H1 (cell line): ENCODE measurements at regions of chr5 and their contacts with region 1.

Region 1: GRCh38 chr5:35777358-35778087 is 79.2 kb upstream of the IL7R start:
- DNase-seq: peak in 1 of 2 experiments; percentile 68
- H3K4me3 ChIP-seq: no peak overlapping the region
- H3K27ac ChIP-seq: no peak overlapping the region
- H3K4me1 ChIP-seq: no peaks in the 10 kb centered on the region
- H3K27me3 ChIP-seq: peaks cover 0 to 1% (median 0%) of the 10 kb centered on the region in 4 experiments; a peak in 1 of 7 replicates
- CTCF ChIP-seq: peak in 2 of 3 experiments; percentile 52; a peak in 2 of 4 replicates
- EP300 ChIP-seq: no peak
- POLR2A ChIP-seq: no peak
- RAD21 ChIP-seq: peak; percentile 60 to 68

Region 2: GRCh38 chr5:35587419-35587818 is 190.1 kb before region 1 on chr5:
- CTCF ChIA-PET with region 1: no interaction called
- POLR2A ChIA-PET with region 1: no interaction called
- DNase-seq: no peak
- H3K4me3 ChIP-seq: no peak overlapping the region
- H3K27ac ChIP-seq: no peak overlapping the region
- H3K4me1 ChIP-seq: no peaks in the 10 kb centered on the region
- H3K27me3 ChIP-seq: no peaks in the 10 kb centered on the region
- CTCF ChIP-seq: no peak
- EP300 ChIP-seq: no peak
- POLR2A ChIP-seq: no peak
- RAD21 ChIP-seq: no peak

Region 3: DNA sequence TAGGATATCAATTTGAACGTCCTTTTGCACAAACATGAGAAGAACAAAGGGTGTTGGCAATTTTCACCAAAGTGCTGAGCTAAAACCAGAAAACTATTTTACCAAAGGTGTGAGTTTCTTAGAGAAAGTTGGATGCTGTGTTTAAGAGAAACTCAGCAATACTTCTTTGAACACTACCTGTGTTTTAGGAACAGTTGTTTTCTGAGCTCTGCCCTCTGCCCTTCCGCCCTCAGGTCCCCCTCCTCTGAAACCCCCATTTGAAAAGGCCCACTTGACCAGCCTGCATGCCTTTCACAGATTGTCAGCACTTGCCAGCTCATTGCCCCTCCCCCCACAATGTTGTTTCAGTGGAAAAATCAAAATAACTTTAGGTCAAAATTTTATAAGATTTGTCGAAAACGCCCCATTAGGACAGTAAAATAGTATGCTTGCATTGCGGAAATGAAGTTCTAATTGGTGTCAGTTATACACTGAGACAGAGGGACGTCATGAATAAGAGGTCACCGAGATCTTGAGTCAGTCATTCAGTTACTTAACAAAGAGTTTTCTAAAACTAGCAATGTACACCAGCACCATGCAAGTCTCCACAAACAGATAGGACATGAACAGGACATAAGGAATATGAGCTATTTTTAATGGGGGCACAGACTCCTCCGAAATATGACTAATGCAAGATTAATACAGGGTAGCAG is 17.3 kb after region 1 on chr5:
- CTCF ChIA-PET with region 1: interaction called, 23 read pairs
- POLR2A ChIA-PET with region 1: no interaction called
- DNase-seq: no peak
- H3K4me3 ChIP-seq: no peak overlapping the region
- H3K27ac ChIP-seq: no peak overlapping the region
- H3K4me1 ChIP-seq: peaks cover 0 to 6% (median 2%) of the 10 kb centered on the region in 4 experiments; a peak in 2 of 7 replicates
- H3K27me3 ChIP-seq: no peaks in the 10 kb centered on the region
- CTCF ChIP-seq: no peak
- EP300 ChIP-seq: no peak
- POLR2A ChIP-seq: no peak
- RAD21 ChIP-seq: no peak

Region 4: GRCh38 chr5:35920890-35921289 is 143.4 kb after region 1 on chr5:
- CTCF ChIA-PET with region 1: interaction called, 65 read pairs
- POLR2A ChIA-PET with region 1: no interaction called
- DNase-seq: no peak
- H3K4me3 ChIP-seq: no peak overlapping the region
- H3K27ac ChIP-seq: no peak overlapping the region
- H3K4me1 ChIP-seq: no peaks in the 10 kb centered on the region
- H3K27me3 ChIP-seq: peaks cover 5 to 18% (median 14%) of the 10 kb centered on the region in 4 experiments
- CTCF ChIP-seq: peak; percentile 36 to 47 (median 40); a peak in 3 of 4 replicates
- EP300 ChIP-seq: no peak
- POLR2A ChIP-seq: no peak
- RAD21 ChIP-seq: peak; percentile 58 to 75